ENCODE measurements at regions of chr20 and their contacts with region 1.

Region 1: DNA sequence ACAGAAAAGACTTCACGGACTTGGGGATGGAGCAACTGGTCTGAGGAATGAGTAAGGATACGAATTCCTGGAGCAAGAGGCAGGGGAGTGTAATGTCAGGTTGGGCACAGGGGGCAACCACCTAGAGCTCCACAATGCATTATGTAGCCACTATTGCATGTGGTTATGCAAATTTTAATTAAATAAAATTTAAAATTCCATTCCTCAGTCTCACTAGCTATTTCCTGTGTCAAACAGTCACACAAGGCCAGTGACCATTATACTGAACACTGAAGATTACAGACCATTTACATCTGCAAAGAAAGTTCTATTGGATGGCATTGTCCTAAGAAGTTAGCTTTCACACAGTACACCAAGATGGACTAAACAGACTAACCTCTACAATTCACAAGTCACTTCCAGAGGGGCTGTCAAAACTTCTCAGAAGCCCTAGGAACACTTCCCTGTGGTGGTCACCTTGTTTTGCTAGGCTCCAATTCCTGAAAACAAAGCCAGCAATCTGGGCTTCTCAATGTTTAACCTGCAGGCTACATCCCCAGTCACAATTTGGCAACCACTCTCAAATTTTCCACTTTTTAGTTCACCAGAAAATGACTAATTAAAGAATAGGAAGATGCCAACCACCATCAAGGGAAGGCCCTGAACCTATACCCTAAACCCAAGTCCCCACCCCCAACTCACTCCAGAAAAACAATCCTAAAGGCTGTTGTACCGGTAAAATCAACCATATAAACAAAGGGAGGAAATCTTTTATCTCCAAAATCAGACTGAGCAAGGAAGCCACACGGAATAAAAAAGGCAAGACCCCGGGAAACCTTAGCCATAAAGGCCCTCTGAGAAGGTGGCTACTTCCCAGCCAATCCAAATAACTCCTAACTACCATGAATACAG is 34.2 kb upstream of the C20orf203 start:
- DNase-seq: peak; percentile 86
- H3K4me3 ChIP-seq: no peak overlapping the region
- H3K27ac ChIP-seq: peak overlapping the region; percentile 83
- H3K4me1 ChIP-seq: peaks cover 22% of the 10 kb centered on the region
- H3K27me3 ChIP-seq: no peaks in the 10 kb centered on the region
- CTCF ChIP-seq: no peak
- POLR2A ChIP-seq: no peak

Region 2: GRCh38 chr20:31747640-31748039 is 960.3 kb before region 1 on chr20:
- CTCF ChIA-PET with region 1: no interaction called
- POLR2A ChIA-PET with region 1: no interaction called
- dilution Hi-C with region 1: no loop called
- intact Hi-C with region 1: loop called (anchors 5 kb)
- DNase-seq: no peak
- H3K4me3 ChIP-seq: no peak overlapping the region
- H3K27ac ChIP-seq: no peak overlapping the region
- H3K4me1 ChIP-seq: peaks cover 4% of the 10 kb centered on the region
- H3K27me3 ChIP-seq: no peaks in the 10 kb centered on the region
- CTCF ChIP-seq: no peak
- POLR2A ChIP-seq: no peak

Region 3: DNA sequence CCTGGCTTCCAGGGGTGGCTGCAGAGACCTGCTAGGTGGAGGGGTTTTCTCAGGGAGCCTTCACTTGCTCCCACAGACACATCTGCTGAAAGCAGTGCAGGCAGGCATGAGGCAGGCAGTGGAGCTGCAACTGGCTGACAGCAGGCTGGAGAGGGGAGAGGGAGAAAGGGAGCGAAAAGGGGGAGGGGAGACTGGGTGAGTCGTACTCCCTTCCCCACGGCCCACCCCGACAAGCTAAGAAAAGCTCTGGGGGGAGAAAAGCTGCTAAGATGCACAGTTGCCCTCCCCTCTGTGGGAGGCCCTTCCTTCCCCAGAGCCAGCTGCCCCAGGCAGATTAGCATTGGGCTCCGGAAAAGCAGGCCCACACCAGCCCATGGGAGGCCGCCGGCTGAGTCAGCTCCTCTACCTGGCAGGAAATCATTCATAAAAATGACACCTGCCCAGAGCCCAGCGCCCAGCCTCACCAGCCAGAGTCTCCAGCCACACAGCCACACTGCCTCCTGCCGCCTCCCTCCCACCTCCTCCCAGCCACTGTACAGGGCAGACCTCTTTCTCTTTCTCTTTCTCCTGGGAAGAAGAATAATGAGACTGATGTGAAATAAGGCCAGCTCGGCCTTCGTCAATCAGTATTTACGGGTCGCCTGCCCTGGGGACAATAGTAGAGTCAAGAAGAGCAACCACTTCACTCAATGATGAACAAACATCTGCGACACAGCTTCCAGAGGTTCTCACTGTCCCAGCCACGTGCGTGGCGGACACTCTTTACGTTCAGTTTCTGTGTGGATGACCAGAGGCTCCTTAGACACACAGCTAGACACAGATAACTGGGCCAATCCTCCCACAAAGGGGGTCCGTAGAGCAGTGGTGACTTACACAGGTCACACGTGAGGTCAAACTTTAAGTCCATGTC is 26.5 kb before region 1 on chr20:
- CTCF ChIA-PET with region 1: no interaction called
- POLR2A ChIA-PET with region 1: interaction called, 5 read pairs
- dilution Hi-C with region 1: no loop called
- intact Hi-C with region 1: loop called (anchors 2 kb)
- DNase-seq: peak; percentile 76
- H3K4me3 ChIP-seq: no peak overlapping the region
- H3K27ac ChIP-seq: no peak overlapping the region
- H3K4me1 ChIP-seq: peaks cover 11% of the 10 kb centered on the region
- H3K27me3 ChIP-seq: no peaks in the 10 kb centered on the region
- CTCF ChIP-seq: no peak
- POLR2A ChIP-seq: no peak

Region 4: DNA sequence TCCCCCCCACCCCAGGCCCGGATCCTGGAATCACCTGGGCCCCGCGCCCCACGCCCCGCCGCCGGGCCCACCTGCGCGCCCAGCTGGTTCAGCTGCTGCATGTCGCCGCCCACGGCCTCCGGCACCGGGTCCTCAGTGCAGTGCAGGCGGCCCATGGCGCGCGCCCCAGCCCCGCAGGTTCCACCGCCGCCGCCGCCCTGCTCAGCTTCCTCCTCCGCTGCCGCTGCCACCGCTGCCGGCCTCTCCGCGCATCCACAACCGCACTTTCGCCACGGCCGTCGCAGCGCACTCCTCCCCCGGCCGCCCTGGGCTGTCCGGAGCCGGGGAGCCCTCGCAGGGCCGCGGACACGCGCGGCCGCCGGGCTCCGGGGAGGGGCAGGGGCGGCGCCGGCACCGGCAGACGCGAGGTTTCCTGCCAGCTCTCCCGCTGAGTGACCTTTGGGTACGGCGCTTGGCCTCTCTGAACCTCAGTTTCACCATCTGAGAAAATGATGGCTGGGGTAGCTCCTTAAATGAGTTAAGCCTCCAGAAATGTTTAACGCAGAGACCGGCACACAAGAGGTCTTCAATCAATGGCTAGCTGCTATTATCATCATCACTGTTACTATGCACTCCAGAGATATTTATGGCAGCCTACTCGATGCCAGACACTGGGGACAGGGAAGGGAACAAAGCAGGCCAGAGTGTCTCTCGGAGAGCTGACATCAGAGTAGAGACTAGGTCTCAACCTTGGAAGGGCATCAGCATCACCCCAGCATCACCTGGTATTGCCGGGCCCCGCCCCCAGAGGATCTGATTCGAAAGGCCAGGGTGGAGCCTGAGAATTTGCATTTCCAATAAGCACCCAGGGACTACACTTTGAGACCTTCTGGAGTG is 35.5 kb after region 1 on chr20 and contains the start of gene COMMD7:
- CTCF ChIA-PET with region 1: no interaction called
- POLR2A ChIA-PET with region 1: no interaction called
- dilution Hi-C with region 1: no loop called
- intact Hi-C with region 1: loop called (anchors 5 kb)
- DNase-seq: peak; percentile 57
- H3K4me3 ChIP-seq: peak within 1 kb of the TSS; percentile 73 to 90 (median 87)
- H3K27ac ChIP-seq: peak within 1 kb of the TSS; percentile 81
- H3K4me1 ChIP-seq: peaks cover 9% of the 10 kb centered on the region
- H3K27me3 ChIP-seq: no peaks in the 10 kb centered on the region
- CTCF ChIP-seq: no peak
- POLR2A ChIP-seq: no peak
- total RNA-seq, gene COMMD7: 55.9 and 58.8 TPM in 2 replicates

Region 5: GRCh38 chr20:32796981-32797451 is 89.1 kb after region 1 on chr20:
- CTCF ChIA-PET with region 1: no interaction called
- POLR2A ChIA-PET with region 1: no interaction called
- dilution Hi-C with region 1: no loop called
- intact Hi-C with region 1: no loop called
- DNase-seq: no peak
- H3K4me3 ChIP-seq: no peak overlapping the region
- H3K27ac ChIP-seq: no peak overlapping the region
- H3K4me1 ChIP-seq: peaks cover 10% of the 10 kb centered on the region
- H3K27me3 ChIP-seq: no peaks in the 10 kb centered on the region
- CTCF ChIP-seq: no peak
- POLR2A ChIP-seq: no peak

Region 6: GRCh38 chr20:32871627-32872160 is 163.8 kb after region 1 on chr20:
- CTCF ChIA-PET with region 1: no interaction called
- POLR2A ChIA-PET with region 1: interaction called, 10 read pairs
- dilution Hi-C with region 1: no loop called
- intact Hi-C with region 1: no loop called
- DNase-seq: no peak
- H3K4me3 ChIP-seq: no peak overlapping the region
- H3K27ac ChIP-seq: no peak overlapping the region
- H3K4me1 ChIP-seq: no peaks in the 10 kb centered on the region
- H3K27me3 ChIP-seq: no peaks in the 10 kb centered on the region
- CTCF ChIP-seq: no peak
- POLR2A ChIP-seq: no peak

Region 7: DNA sequence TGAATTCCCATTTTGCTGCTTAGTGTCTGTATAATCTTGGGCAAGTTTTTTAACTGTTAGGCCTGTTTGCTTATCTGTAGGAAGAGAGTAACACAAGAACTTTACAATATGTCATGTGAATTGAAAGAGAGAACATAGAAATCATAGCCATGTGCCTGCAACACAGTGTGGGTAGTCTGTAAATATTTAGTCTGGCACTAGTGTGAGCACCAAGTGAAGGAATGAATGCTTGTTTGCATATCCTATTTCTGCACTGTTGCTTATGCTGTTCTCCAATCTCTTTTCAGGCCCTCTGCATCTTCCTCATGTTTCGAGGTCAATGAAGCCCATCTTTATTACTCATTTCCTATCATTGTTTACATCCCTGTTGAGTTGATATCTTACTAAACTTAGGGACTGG is 831.2 kb after region 1 on chr20:
- CTCF ChIA-PET with region 1: no interaction called
- POLR2A ChIA-PET with region 1: no interaction called
- dilution Hi-C with region 1: no loop called
- intact Hi-C with region 1: no loop called
- DNase-seq: peak; percentile 57
- H3K4me3 ChIP-seq: no peak overlapping the region
- H3K27ac ChIP-seq: peak overlapping the region; percentile 8
- H3K4me1 ChIP-seq: peaks cover 21% of the 10 kb centered on the region
- H3K27me3 ChIP-seq: no peaks in the 10 kb centered on the region
- CTCF ChIP-seq: no peak
- POLR2A ChIP-seq: no peak

Measured in endothelial cell of umbilical vein (primary cell).